Activated T-helper 2 cell treated with anti-CD3 and anti-CD28 coated beads, Interferon-gamma antibody, Interleukin-2, Interleukin-4, amounts not matched to agents 10 μg/mL and 5 μg/mL and 100 μg/mL, durations not matched to agents 14 hours and 24 hours and 36 hours (primary cell): ENCODE measurements at regions of chr1 and their contacts with region 1.

Region 1: DNA sequence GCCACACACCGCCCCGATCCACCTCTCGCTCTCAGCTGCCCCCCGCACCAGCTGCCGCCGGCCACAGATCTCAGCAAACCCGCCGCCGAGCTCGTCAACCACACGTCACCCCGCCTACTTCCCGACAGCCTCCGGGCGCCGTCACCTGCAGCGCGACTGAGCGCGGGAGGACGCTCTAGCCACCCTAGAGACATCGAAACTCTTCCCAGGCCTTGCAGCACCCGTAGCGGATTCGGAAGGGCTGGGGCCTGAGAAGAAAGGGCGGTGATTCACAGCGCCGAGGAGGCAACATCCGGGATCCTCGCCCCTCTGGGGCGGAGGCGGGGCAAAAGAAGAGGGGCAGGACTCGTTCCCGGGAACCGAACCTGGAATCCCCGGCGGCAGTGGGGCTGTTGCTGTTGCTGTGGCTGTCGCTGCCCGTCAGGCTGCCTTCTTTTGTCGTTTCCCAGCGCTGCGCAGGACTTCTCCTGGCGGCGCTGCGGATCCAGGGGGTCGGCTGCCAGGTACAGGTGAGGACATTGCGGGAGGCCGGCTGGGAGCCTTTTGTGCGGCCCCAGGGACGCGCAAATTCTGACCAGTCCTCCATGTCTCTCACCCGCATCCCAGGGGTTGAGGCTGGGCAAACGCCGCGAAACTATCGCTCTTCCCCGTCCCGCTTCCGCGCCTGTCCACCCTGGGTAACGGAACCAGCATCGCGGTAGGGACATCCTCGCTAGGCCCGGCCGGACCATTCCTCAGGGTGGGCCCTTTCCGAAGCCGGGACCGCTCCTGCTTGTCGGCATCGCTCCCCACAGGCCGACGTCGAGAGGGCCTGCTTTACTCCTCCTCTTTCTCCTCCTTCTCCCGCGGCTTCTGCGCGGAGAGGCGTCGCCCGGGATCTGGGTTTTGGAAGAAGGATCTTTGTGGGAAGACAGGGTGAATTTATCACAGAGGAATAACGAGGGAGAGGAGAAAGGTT is at the starts of genes RO60 and UCHL5:
- DNase-seq: peak; percentile 95
- H3K4me3 Mint-ChIP-seq: peak within 1 kb of the TSS; percentile 98
- H3K27ac Mint-ChIP-seq: peak within 1 kb of the TSS; percentile 99
- H3K4me1 Mint-ChIP-seq: peaks cover 47% of the 10 kb centered on the region
- H3K27me3 Mint-ChIP-seq: no peaks in the 10 kb centered on the region
- total RNA-seq, gene RO60: 71.4 and 72.7 TPM in 2 replicates
- total RNA-seq, gene UCHL5: 77.6 and 78.5 TPM in 2 replicates

Region 2: GRCh38 chr1:192539297-192540092 is 520.1 kb before region 1 on chr1:
- intact Hi-C with region 1: loop called (anchors 5 kb)
- DNase-seq: no peak
- H3K4me3 Mint-ChIP-seq: no peak overlapping the region
- H3K27ac Mint-ChIP-seq: peak overlapping the region; percentile 72
- H3K4me1 Mint-ChIP-seq: peaks cover 52% of the 10 kb centered on the region
- H3K27me3 Mint-ChIP-seq: no peaks in the 10 kb centered on the region

Region 3: GRCh38 chr1:192936313-192937018 is 123.1 kb before region 1 on chr1:
- intact Hi-C with region 1: loop called (anchors 2 kb)
- DNase-seq: no peak
- H3K4me3 Mint-ChIP-seq: no peak overlapping the region
- H3K27ac Mint-ChIP-seq: peak overlapping the region; percentile 53
- H3K4me1 Mint-ChIP-seq: peaks cover 22% of the 10 kb centered on the region
- H3K27me3 Mint-ChIP-seq: no peaks in the 10 kb centered on the region

Region 4: DNA sequence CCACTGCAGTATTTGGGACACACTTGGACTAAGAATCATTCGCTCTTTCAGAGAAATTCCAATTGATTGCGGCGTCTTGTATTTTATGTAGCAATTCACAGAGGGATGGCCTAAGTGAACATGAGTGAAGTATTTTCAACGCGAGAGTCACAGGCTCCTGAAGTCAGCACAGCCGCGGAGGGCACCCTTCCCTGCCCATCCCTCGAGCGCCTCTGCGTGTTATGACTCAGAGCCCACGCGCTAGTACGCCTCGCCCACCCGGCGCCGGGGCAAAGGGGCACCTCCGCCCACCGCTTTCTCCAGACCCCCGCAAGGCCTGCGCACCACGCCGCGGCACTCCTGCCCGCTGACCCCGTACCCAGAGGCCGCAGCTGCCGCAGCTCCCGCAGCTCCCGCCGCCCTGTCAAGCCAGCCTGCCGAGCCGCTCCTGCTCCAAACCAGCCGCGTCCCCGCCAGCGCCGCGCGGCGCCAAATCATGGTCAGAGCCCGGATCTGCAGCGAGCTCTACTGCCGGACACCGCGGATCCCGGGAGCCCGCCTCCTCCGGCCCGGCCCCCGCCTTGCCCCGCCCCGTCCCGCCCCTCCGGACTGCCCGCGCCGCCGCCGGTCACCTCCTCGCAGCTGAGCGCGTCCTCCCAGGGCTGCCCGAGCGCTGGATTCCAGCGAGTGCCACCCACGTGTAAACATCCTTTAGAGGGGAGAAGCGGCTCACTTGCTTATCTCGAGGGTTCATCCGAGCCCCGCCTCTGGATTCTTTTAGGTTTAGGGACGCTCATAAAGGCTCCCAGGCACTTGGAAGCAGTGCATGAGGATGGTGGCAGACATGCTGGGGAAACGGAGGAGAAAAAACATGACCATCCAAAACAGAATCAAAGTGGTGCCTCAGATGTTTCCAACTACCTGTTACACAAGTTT is 45.6 kb after region 1 on chr1 and contains the start of gene GLRX2:
- intact Hi-C with region 1: loop called (anchors 1 kb)
- DNase-seq: peak; percentile 38
- H3K4me3 Mint-ChIP-seq: peak within 1 kb of the TSS; percentile 88
- H3K27ac Mint-ChIP-seq: peak within 1 kb of the TSS; percentile 71
- H3K4me1 Mint-ChIP-seq: peaks cover 17% of the 10 kb centered on the region
- H3K27me3 Mint-ChIP-seq: peaks cover 5% of the 10 kb centered on the region
- total RNA-seq, gene GLRX2: 29.0 and 31.6 TPM in 2 replicates

Region 5: GRCh38 chr1:193121616-193122593 is 62.4 kb after region 1 on chr1 and contains the start of gene CDC73:
- intact Hi-C with region 1: loop called (anchors 1 kb)
- DNase-seq: peak; percentile 97
- H3K4me3 Mint-ChIP-seq: peak within 1 kb of the TSS; percentile 99
- H3K27ac Mint-ChIP-seq: peak within 1 kb of the TSS; percentile 93
- H3K4me1 Mint-ChIP-seq: peaks cover 49% of the 10 kb centered on the region
- H3K27me3 Mint-ChIP-seq: peaks cover 8% of the 10 kb centered on the region
- total RNA-seq, gene CDC73: 47.0 and 53.3 TPM in 2 replicates